Sigmoid colon (tissue), 7 donors: ENCODE measurements at regions of chr6 and their contacts with region 1.

Region 1: GRCh38 chr6:28981833-28982475 is 23.2 kb downstream of the ZNF311 start:
- DNase-seq: peak; percentile 93
- H3K4me3 ChIP-seq: peak overlapping the region; percentile 41 to 75 (median 54)
- H3K27ac ChIP-seq: peak overlapping the region; percentile 74 to 88 (median 83)
- H3K4me1 ChIP-seq: peaks cover 0 to 25% (median 6%) of the 10 kb centered on the region in 4 donors
- H3K27me3 ChIP-seq: peaks cover 4 to 16% (median 6%) of the 10 kb centered on the region in 3 donors
- CTCF ChIP-seq: no peak
- EP300 ChIP-seq: no peak
- POLR2A ChIP-seq: no peak

Region 2: DNA sequence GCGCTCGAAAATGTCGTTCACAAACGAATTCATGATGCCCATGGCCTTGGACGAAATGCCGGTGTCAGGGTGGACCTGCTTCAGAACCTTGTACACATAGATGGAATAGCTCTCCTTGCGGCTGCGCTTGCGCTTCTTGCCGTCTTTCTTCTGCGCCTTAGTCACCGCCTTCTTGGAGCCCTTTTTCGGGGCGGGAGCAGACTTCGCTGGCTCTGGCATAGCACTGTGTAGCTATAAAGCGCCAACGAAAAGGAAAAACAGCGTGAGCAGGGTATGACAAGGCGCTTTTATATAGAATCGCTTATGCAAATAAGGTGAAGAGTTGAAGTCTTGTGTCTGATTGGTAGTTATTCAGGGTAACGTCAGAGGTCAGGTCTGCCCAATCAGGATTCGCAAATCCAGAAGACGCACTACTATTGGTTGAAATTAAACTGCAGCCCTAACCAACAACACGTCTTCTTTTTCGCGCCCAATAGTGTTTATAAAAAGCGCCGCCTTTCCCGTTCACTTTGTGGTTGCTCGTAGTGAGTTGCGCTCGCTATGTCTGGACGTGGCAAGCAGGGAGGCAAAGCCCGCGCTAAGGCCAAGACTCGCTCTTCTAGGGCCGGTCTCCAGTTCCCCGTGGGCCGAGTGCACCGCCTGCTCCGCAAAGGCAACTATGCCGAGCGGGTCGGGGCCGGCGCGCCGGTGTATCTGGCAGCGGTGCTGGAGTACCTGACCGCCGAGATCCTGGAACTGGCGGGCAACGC is 1849.2 kb before region 1 on chr6:
- intact Hi-C with region 1: loop called (anchors 10 kb)
- DNase-seq: peak; percentile 96
- H3K4me3 ChIP-seq: peak overlapping the region; percentile 38 to 55 (median 52)
- H3K27ac ChIP-seq: peak overlapping the region; percentile 87 to 95 (median 92)
- H3K4me1 ChIP-seq: peaks cover 0 to 22% (median 11%) of the 10 kb centered on the region in 4 donors
- H3K27me3 ChIP-seq: no peaks in the 10 kb centered on the region
- CTCF ChIP-seq: no peak
- EP300 ChIP-seq: no peak
- POLR2A ChIP-seq: peak; percentile 93 to 95

Region 3: GRCh38 chr6:28225056-28225834 is 756.7 kb before region 1 on chr6 and contains the start of gene ZSCAN9:
- intact Hi-C with region 1: loop called (anchors 10 kb)
- DNase-seq: peak; percentile 93
- H3K4me3 ChIP-seq: peak within 1 kb of the TSS; percentile 67 to 78 (median 71)
- H3K27ac ChIP-seq: peak within 1 kb of the TSS; percentile 81 to 87 (median 86)
- H3K4me1 ChIP-seq: peaks cover 0 to 21% (median 8%) of the 10 kb centered on the region in 4 donors
- H3K27me3 ChIP-seq: no peaks in the 10 kb centered on the region
- CTCF ChIP-seq: no peak
- EP300 ChIP-seq: peak in 1 of 4 donors; percentile 11
- POLR2A ChIP-seq: no peak
- total RNA-seq, gene ZSCAN9: 14.0 to 15.1 (median 14.8) TPM

Region 4: GRCh38 chr6:28838634-28839442 is 143.1 kb before region 1 on chr6:
- intact Hi-C with region 1: loop called (anchors 1 kb)
- DNase-seq: peak; percentile 90
- H3K4me3 ChIP-seq: peak overlapping the region; percentile 47 to 59 (median 58)
- H3K27ac ChIP-seq: peak overlapping the region; percentile 76 to 80 (median 78)
- H3K4me1 ChIP-seq: peaks cover 0 to 16% (median 11%) of the 10 kb centered on the region in 4 donors
- H3K27me3 ChIP-seq: peaks cover 0 to 16% (median 1%) of the 10 kb centered on the region in 3 donors
- CTCF ChIP-seq: peak; percentile 16 to 60 (median 27)
- EP300 ChIP-seq: no peak
- POLR2A ChIP-seq: no peak

Region 5: DNA sequence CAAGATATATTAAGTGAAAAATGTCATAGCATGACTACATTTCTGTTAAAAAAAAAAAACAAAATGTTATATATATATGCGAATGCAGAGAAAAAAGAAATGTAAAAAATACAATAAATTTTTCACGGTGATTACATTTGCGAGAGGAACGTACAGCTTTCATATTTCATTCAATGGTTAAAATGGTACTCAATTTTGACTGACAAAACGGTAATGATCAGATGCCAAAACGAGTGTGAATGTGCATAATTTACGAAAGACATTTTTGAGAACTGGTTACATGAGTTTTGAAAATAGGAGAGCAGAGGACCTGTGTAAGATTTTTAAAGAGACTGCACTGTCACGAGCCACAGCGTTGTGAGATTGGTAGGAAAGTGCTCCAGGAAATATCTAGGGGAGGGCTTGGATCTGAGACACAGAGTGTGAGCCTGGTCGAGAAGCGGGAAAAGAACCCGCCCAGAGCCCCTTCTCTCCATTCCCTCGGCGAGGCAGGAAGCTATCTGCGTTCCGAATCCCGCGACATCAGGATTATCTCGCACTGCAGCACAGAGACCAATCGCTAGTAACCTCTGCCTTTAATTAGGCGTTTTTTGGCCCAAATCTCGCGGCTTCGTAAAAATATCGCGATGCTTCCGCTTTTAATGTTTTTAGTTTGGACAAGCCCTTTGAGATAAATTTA is 86.7 kb before region 1 on chr6:
- intact Hi-C with region 1: loop called (anchors 1 kb)
- DNase-seq: peak; percentile 97
- H3K4me3 ChIP-seq: peak overlapping the region; percentile 58 to 76 (median 70)
- H3K27ac ChIP-seq: peak overlapping the region; percentile 96 to 99 (median 97)
- H3K4me1 ChIP-seq: peaks cover 0 to 16% (median 7%) of the 10 kb centered on the region in 4 donors
- H3K27me3 ChIP-seq: no peaks in the 10 kb centered on the region
- CTCF ChIP-seq: no peak
- EP300 ChIP-seq: no peak
- POLR2A ChIP-seq: peak; percentile 38 to 64

Region 6: GRCh38 chr6:29005183-29005885 is 23.4 kb after region 1 on chr6 and contains the start of gene ZNF311:
- intact Hi-C with region 1: loop called (anchors 2 kb)
- DNase-seq: peak; percentile 77
- H3K4me3 ChIP-seq: peak within 1 kb of the TSS; percentile 52 to 67 (median 60)
- H3K27ac ChIP-seq: peak within 1 kb of the TSS; percentile 51 to 75 (median 69)
- H3K4me1 ChIP-seq: peaks cover 0 to 5% (median 2%) of the 10 kb centered on the region in 4 donors
- H3K27me3 ChIP-seq: no peaks in the 10 kb centered on the region
- CTCF ChIP-seq: no peak
- EP300 ChIP-seq: no peak
- POLR2A ChIP-seq: no peak
- total RNA-seq, gene ZNF311: 0.28 to 1.4 (median 0.83) TPM

Region 7: GRCh38 chr6:29332672-29333071 is 350.7 kb after region 1 on chr6:
- intact Hi-C with region 1: no loop called
- DNase-seq: no peak
- H3K4me3 ChIP-seq: no peak overlapping the region
- H3K27ac ChIP-seq: no peak overlapping the region
- H3K4me1 ChIP-seq: no peaks in the 10 kb centered on the region
- H3K27me3 ChIP-seq: no peaks in the 10 kb centered on the region
- CTCF ChIP-seq: no peak
- EP300 ChIP-seq: no peak
- POLR2A ChIP-seq: no peak

Region 8: GRCh38 chr6:30066577-30067459 is 1084.9 kb after region 1 on chr6 and contains the start of gene PPP1R11:
- intact Hi-C with region 1: loop called (anchors 10 kb)
- DNase-seq: peak; percentile 100
- H3K4me3 ChIP-seq: peak within 1 kb of the TSS; percentile 52 to 80 (median 62)
- H3K27ac ChIP-seq: peak within 1 kb of the TSS; percentile 81 to 93 (median 88)
- H3K4me1 ChIP-seq: peaks cover 0 to 42% (median 37%) of the 10 kb centered on the region in 4 donors
- H3K27me3 ChIP-seq: peaks cover 5 to 27% (median 16%) of the 10 kb centered on the region in 3 donors
- CTCF ChIP-seq: no peak
- EP300 ChIP-seq: peak in 1 of 4 donors; percentile 91
- POLR2A ChIP-seq: peak; percentile 86 to 93
- total RNA-seq, gene PPP1R11: 36.8 to 45.7 (median 42.2) TPM